Gastrocnemius medialis (tissue), 4 donors: ENCODE measurements at regions of chr11 and their contacts with region 1.

Region 1: DNA sequence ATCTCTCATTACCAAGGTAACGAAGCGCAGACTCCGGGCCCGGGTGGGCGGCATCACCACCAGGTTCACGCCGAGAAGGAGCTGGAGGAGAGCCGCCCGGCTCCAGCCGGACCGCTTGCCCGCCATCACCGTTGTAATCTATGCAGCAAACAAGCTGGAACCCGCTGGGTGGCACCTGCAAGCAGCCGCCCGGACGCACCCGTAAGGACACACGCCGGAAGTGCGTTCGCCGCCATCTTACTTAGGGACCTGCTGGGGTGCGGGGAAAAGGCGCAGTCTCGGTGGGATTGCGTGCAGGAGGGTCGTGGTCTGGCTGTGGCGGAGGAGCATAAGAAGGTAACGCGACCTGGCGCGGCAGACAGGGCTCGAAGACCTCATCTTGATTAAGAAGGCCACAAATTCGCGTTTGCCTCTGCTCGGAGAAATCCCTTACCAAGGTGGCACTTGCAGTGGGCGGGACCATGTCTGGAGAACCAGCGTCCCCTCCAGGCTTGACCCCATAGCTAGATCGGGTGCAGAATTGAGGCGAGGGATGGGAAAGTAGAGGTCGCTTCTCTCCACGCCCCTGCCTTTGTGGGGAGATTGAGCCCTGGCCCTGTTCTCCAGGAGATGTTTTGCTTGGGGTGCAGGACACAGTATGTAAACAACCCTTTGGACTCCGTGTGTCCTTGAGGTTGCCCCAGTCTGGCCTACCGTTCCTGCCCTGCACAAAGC is at the start of gene ACP2:
- DNase-seq: peak; percentile 83 to 88
- ATAC-seq: peak; percentile 95 to 97
- H3K4me3 ChIP-seq: peak within 1 kb of the TSS; percentile 79 to 96 (median 92)
- H3K27ac ChIP-seq: peak within 1 kb of the TSS; percentile 84 to 97 (median 94)
- H3K4me1 ChIP-seq: peaks cover 21 to 30% of the 10 kb centered on the region in 2 donors
- H3K27me3 ChIP-seq: no peaks in the 10 kb centered on the region
- CTCF ChIP-seq: peak in 4 of 5 experiments; percentile 17 to 36 (median 32)
- POLR2A ChIP-seq: peak; percentile 46 to 49
- total RNA-seq, gene ACP2: 12.4 to 36.2 (median 27.9) TPM

Region 2: GRCh38 chr11:46916286-46917108 is 332.3 kb before region 1 on chr11:
- in situ Hi-C with region 1: no loop called
- intact Hi-C with region 1: loop called (anchors 10 kb)
- DNase-seq: peak; percentile 45 to 72
- ATAC-seq: peak; percentile 28 to 57
- H3K4me3 ChIP-seq: peak overlapping the region; percentile 64 to 81 (median 70)
- H3K27ac ChIP-seq: peak overlapping the region; percentile 82 to 90 (median 88)
- H3K4me1 ChIP-seq: peaks cover 64 to 66% of the 10 kb centered on the region in 2 donors
- H3K27me3 ChIP-seq: no peaks in the 10 kb centered on the region
- CTCF ChIP-seq: no peak
- POLR2A ChIP-seq: peak; percentile 67 to 82

Region 3: GRCh38 chr11:47152953-47153950 is 95.6 kb before region 1 on chr11:
- in situ Hi-C with region 1: no loop called
- intact Hi-C with region 1: no loop called
- DNase-seq: peak; percentile 64 to 87
- ATAC-seq: peak; percentile 81
- H3K4me3 ChIP-seq: no peak overlapping the region
- H3K27ac ChIP-seq: peak overlapping the region in 3 of 4 donors; percentile 1 to 41 (median 39)
- H3K4me1 ChIP-seq: peaks cover 21 to 23% of the 10 kb centered on the region in 2 donors
- H3K27me3 ChIP-seq: no peaks in the 10 kb centered on the region
- CTCF ChIP-seq: peak; percentile 92 to 98 (median 94)
- POLR2A ChIP-seq: no peak

Region 4: DNA sequence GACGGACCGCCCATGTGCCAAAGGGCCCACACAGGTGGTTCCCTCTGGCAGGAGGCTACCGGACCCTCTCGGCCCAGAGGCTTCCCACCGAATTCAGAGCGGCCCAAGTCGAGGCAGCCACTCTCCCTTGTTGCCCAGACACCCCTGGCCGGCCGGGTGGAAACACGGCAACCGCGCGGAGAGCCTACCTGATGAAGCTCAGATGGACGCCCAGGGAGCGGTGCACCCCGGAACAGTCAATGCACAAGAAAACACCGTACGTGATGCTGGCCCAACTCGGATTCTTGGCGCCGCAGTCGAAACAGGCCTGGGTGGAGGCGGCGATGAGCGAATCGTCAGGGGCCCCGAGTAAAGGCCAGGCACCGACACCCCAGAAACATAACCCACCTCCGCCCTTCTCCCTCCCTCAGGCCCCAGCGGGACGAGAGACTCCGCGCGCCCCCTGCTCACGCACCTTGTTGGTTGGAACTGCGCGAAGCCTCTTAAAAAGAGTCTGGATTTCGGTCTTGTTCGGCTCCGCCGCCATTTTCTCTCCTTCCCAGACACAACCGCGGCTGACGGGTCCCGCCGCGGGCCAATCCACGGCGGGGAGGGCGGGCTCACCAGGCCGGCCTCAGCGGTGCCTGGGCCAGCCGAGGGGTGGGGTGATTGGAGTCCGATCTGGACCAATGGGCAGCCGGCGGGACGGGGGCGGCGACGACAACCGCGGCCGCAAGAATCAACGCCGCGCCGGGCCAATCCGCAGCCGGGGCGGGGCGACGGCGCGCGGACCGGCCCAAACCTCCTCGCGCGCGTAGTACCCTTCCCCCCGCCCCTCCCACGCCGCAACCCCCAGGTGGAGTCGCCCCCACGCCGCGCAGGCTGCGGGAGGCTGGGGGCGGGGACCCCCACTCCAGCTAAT is 72.2 kb before region 1 on chr11 and contains the start of gene ARFGAP2:
- in situ Hi-C with region 1: loop called in 1 of 4 experiments (anchors 5 kb)
- intact Hi-C with region 1: loop called (anchors 2 kb)
- DNase-seq: peak; percentile 96 to 97
- ATAC-seq: peak; percentile 75 to 78
- H3K4me3 ChIP-seq: peak within 1 kb of the TSS; percentile 83 to 93 (median 89)
- H3K27ac ChIP-seq: peak within 1 kb of the TSS; percentile 97 to 99 (median 98)
- H3K4me1 ChIP-seq: peaks cover 69 to 71% of the 10 kb centered on the region in 2 donors
- H3K27me3 ChIP-seq: no peaks in the 10 kb centered on the region
- CTCF ChIP-seq: no peak
- POLR2A ChIP-seq: peak; percentile 43 to 62
- total RNA-seq, gene ARFGAP2: 120 to 165 (median 142) TPM

Region 5: DNA sequence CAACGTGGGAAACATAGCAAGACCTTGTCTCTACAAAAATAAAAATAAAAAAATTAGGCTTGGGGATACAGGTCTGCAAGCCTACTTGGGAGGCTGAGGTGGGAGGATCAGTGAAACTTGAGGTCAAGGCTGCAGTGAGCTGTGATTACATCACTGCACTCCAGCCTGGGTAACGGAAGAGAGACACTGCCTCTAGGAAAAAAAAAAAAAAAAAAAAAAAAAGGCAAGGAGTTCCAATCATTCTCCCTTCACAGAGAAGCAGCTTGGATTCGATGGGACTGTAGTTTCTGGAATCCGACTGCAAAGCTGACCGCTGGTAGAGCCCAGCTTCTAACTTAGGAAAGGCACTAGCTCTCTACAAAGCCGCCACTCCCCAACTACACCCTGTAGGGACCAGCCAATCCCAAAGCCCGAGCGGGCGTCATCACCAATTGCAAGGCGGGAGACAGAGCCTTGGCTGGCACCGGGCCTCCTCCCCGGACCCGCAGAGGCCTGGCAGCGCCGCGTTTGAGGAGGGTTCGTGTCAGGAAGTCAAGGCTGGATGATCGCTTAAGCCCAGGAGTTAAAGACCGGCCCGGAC is 34.7 kb before region 1 on chr11:
- in situ Hi-C with region 1: no loop called
- intact Hi-C with region 1: loop called (anchors 1 kb)
- DNase-seq: peak; percentile 92 to 94
- ATAC-seq: peak; percentile 95 to 96
- H3K4me3 ChIP-seq: peak overlapping the region; percentile 69 to 89 (median 70)
- H3K27ac ChIP-seq: peak overlapping the region; percentile 95 to 98 (median 97)
- H3K4me1 ChIP-seq: peaks cover 14 to 23% of the 10 kb centered on the region in 2 donors
- H3K27me3 ChIP-seq: no peaks in the 10 kb centered on the region
- CTCF ChIP-seq: no peak
- POLR2A ChIP-seq: peak; percentile 64 to 74

Region 6: GRCh38 chr11:47269002-47269828 is 20.4 kb after region 1 on chr11:
- in situ Hi-C with region 1: no loop called
- intact Hi-C with region 1: loop called (anchors 1 kb)
- DNase-seq: peak; percentile 88 to 93
- ATAC-seq: peak; percentile 77 to 81
- H3K4me3 ChIP-seq: peak overlapping the region; percentile 55 to 87 (median 86)
- H3K27ac ChIP-seq: peak overlapping the region; percentile 98 to 99 (median 98)
- H3K4me1 ChIP-seq: peaks cover 37 to 40% of the 10 kb centered on the region in 2 donors
- H3K27me3 ChIP-seq: no peaks in the 10 kb centered on the region
- CTCF ChIP-seq: no peak
- POLR2A ChIP-seq: no peak

Region 7: GRCh38 chr11:47373876-47374720 is 125.3 kb after region 1 on chr11:
- in situ Hi-C with region 1: loop called in 2 of 4 experiments (anchors 25 kb)
- intact Hi-C with region 1: no loop called
- DNase-seq: peak; percentile 46 to 71
- ATAC-seq: peak; percentile 78 to 87
- H3K4me3 ChIP-seq: no peak overlapping the region
- H3K27ac ChIP-seq: peak overlapping the region in 2 of 4 donors; percentile 10 to 37
- H3K4me1 ChIP-seq: peaks cover 0 to 6% of the 10 kb centered on the region in 2 donors
- H3K27me3 ChIP-seq: no peaks in the 10 kb centered on the region
- CTCF ChIP-seq: peak; percentile 90 to 97 (median 93)
- POLR2A ChIP-seq: no peak